ENCODE measurements at regions of chr20 and their contacts with region 1.

Region 1: DNA sequence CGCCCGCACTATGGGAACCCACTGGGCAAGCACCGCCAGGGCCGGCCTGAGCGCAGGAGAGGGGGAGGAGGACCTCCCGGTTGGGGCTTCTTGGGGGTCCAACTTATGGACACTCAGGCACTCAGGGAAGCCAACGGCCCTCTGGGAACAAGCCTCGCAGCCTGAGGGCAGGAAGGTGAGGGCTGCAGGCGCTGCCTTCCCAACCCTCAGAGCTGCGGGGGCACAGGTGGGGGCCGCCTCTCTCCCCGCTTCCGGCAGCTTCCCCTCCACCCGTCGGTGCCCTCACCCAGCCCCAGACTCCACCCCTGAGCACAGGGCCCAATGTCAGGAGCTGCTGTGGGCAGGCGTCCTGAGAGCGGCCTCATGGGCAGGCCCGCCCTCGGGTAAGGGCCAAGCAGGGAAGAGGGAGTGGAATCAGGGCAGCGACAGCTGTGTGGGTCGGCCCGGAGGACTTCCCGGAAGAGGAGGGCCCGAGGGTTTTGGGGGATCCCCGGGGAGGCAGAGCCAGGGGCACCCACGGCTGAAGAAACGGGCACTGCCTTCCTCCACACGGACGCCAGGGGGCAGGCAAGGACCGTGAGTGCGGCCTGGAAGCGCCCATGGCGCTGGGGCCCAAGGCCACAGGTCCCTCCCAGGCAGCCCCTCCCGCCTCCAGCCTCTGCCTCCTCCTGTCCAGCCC is 488 bp upstream of the PTK6 start:
- DNase-seq: peak; percentile 92 to 95 (median 93)
- H3K4me3 ChIP-seq: peak overlapping the region in 1 of 2 donors; percentile 56
- H3K4me3 Mint-ChIP-seq: peak overlapping the region; percentile 65 to 85 (median 80)
- H3K27ac ChIP-seq: peak overlapping the region; percentile 68
- H3K27ac Mint-ChIP-seq: peak overlapping the region; percentile 35 to 89 (median 81)
- H3K4me1 ChIP-seq: peaks cover 28% of the 10 kb centered on the region
- H3K4me1 Mint-ChIP-seq: peaks cover 0 to 17% (median 2%) of the 10 kb centered on the region in 4 donors
- H3K27me3 ChIP-seq: no peaks in the 10 kb centered on the region
- H3K27me3 Mint-ChIP-seq: no peaks in the 10 kb centered on the region

Region 2: DNA sequence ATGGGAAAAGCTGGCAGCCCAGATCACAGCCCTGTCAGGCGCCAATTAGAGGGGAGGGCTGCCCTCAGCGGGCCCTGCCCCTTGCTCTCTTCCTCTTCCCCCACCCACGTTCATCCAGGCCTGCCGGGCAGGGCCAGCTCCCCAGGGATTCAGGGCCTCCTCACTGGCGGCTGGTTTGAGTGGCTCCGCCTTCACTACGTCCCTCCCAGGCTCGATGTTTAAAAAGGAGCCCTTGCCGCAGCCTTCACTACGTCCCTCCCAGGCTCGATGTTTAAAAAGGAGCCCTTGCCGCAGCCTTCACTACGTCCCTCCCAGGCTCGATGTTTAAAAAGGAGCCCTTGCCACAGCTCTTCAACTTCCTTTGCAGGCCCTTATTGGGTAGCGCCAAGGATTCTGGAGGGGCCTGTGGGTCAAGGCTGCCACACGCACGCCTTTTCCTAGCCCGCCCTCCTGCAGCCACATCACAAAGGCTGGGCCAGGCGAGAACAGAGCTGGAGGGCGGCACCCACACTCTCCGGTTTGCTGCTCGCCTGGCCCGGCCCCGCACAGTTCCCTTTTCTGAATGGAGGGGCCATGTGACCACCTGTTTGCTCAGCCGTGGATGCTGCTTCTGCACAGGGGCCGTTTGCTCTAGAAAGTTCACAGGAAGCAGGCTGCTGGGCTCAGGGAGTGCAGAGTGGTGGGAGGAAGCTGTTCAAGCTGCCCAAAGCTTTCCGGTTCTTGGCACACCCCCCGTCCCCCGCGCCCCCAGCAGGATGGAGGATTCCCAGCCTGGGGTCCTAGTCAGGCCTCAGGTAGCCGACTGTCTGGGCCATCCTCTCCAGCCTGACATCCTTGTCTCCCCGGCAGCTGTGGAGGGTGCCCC is 583.6 kb before region 1 on chr20:
- CTCF ChIA-PET with region 1: no interaction called
- POLR2A ChIA-PET with region 1: no interaction called
- intact Hi-C with region 1: no loop called
- DNase-seq: peak; percentile 74 to 85 (median 77)
- H3K4me3 ChIP-seq: peak overlapping the region; percentile 17 to 27
- H3K4me3 Mint-ChIP-seq: peak overlapping the region; percentile 72 to 93 (median 83)
- H3K27ac ChIP-seq: peak overlapping the region; percentile 57
- H3K27ac Mint-ChIP-seq: peak overlapping the region; percentile 92 to 95 (median 93)
- H3K4me1 ChIP-seq: peaks cover 28% of the 10 kb centered on the region
- H3K4me1 Mint-ChIP-seq: peaks cover 11 to 31% (median 24%) of the 10 kb centered on the region in 4 donors
- H3K27me3 ChIP-seq: no peaks in the 10 kb centered on the region
- H3K27me3 Mint-ChIP-seq: no peaks in the 10 kb centered on the region

Region 3: GRCh38 chr20:63495741-63496595 is 41.7 kb before region 1 on chr20:
- CTCF ChIA-PET with region 1: interaction called, 12 read pairs
- POLR2A ChIA-PET with region 1: interaction called, 7 read pairs
- intact Hi-C with region 1: no loop called
- DNase-seq: peak; percentile 63 to 72 (median 68)
- H3K4me3 ChIP-seq: peak overlapping the region in 1 of 2 donors; percentile 43
- H3K4me3 Mint-ChIP-seq: peak overlapping the region in 7 of 8 donors; percentile 48 to 83 (median 71)
- H3K27ac ChIP-seq: no peak overlapping the region
- H3K27ac Mint-ChIP-seq: no peak overlapping the region
- H3K4me1 ChIP-seq: peaks cover 18% of the 10 kb centered on the region
- H3K4me1 Mint-ChIP-seq: peaks cover 1 to 8% (median 3%) of the 10 kb centered on the region in 4 donors
- H3K27me3 ChIP-seq: peaks cover 12% of the 10 kb centered on the region
- H3K27me3 Mint-ChIP-seq: peaks cover 5 to 9% of the 10 kb centered on the region in 2 donors

Region 4: GRCh38 chr20:63567386-63568169 is 29.9 kb after region 1 on chr20:
- CTCF ChIA-PET with region 1: interaction called, 3 read pairs
- POLR2A ChIA-PET with region 1: interaction called, 11 read pairs
- intact Hi-C with region 1: no loop called
- DNase-seq: peak; percentile 39 to 71 (median 57)
- H3K4me3 ChIP-seq: peak overlapping the region; percentile 42 to 68
- H3K4me3 Mint-ChIP-seq: peak overlapping the region; percentile 78 to 92 (median 84)
- H3K27ac ChIP-seq: peak overlapping the region; percentile 24
- H3K27ac Mint-ChIP-seq: peak overlapping the region in 5 of 7 donors; percentile 57 to 87 (median 60)
- H3K4me1 ChIP-seq: peaks cover 28% of the 10 kb centered on the region
- H3K4me1 Mint-ChIP-seq: peaks cover 6 to 31% (median 18%) of the 10 kb centered on the region in 4 donors
- H3K27me3 ChIP-seq: no peaks in the 10 kb centered on the region
- H3K27me3 Mint-ChIP-seq: no peaks in the 10 kb centered on the region

Region 5: GRCh38 chr20:63627129-63627750 is 89.6 kb after region 1 on chr20:
- CTCF ChIA-PET with region 1: interaction called, 6 read pairs
- POLR2A ChIA-PET with region 1: interaction called, 10 read pairs
- intact Hi-C with region 1: no loop called
- DNase-seq: peak; percentile 92 to 99 (median 96)
- H3K4me3 ChIP-seq: peak overlapping the region; percentile 91 to 95
- H3K4me3 Mint-ChIP-seq: peak overlapping the region; percentile 94 to 99 (median 96)
- H3K27ac ChIP-seq: peak overlapping the region; percentile 86
- H3K27ac Mint-ChIP-seq: peak overlapping the region; percentile 57 to 96 (median 90)
- H3K4me1 ChIP-seq: peaks cover 41% of the 10 kb centered on the region
- H3K4me1 Mint-ChIP-seq: peaks cover 19 to 54% (median 37%) of the 10 kb centered on the region in 4 donors
- H3K27me3 ChIP-seq: no peaks in the 10 kb centered on the region
- H3K27me3 Mint-ChIP-seq: no peaks in the 10 kb centered on the region

Region 6: GRCh38 chr20:63657937-63658748 is 120.5 kb after region 1 on chr20 and contains the start of gene RTEL1:
- CTCF ChIA-PET with region 1: interaction called, 6 read pairs
- POLR2A ChIA-PET with region 1: interaction called, 13 read pairs
- intact Hi-C with region 1: loop called (anchors 1 kb)
- DNase-seq: peak; percentile 86 to 93 (median 88)
- H3K4me3 ChIP-seq: peak within 1 kb of the TSS; percentile 91 to 97
- H3K4me3 Mint-ChIP-seq: peak within 1 kb of the TSS; percentile 92 to 98 (median 96)
- H3K27ac ChIP-seq: peak within 1 kb of the TSS; percentile 75
- H3K27ac Mint-ChIP-seq: peak within 1 kb of the TSS; percentile 94 to 98 (median 96)
- H3K4me1 ChIP-seq: peaks cover 42% of the 10 kb centered on the region
- H3K4me1 Mint-ChIP-seq: peaks cover 17 to 48% (median 24%) of the 10 kb centered on the region in 4 donors
- H3K27me3 ChIP-seq: no peaks in the 10 kb centered on the region
- H3K27me3 Mint-ChIP-seq: no peaks in the 10 kb centered on the region
- total RNA-seq, gene RTEL1: 30.9 to 36.0 TPM

Region 7: DNA sequence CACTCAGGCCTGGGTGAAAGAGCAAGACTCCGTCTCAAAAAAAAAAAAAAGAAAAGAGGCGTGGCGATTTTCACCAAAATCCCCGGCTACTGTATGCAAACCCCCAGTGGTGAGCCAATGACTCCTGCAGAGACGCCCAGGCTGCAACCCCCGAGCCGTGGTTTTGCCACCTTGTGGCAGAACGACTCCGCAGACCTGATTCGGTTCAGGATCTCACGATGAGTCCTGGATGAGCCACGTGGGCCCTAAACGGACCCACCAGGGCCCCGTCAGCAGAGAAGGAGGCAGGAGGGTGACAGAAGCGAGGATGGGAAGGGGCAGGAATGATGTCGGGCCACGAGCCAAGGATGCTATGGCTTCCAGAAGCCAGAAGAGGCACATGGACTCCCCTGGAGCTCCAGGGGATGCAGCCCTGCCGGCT is 244.4 kb after region 1 on chr20:
- CTCF ChIA-PET with region 1: interaction called, 15 read pairs
- POLR2A ChIA-PET with region 1: interaction called, 5 read pairs
- intact Hi-C with region 1: loop called (anchors 1 kb)
- DNase-seq: peak; percentile 65 to 83 (median 73)
- H3K4me3 ChIP-seq: no peak overlapping the region
- H3K4me3 Mint-ChIP-seq: peak overlapping the region in 6 of 8 donors; percentile 55 to 80 (median 70)
- H3K27ac ChIP-seq: no peak overlapping the region
- H3K27ac Mint-ChIP-seq: peak overlapping the region; percentile 17 to 90 (median 82)
- H3K4me1 ChIP-seq: peaks cover 14% of the 10 kb centered on the region
- H3K4me1 Mint-ChIP-seq: peaks cover 16 to 27% (median 17%) of the 10 kb centered on the region in 4 donors
- H3K27me3 ChIP-seq: no peaks in the 10 kb centered on the region
- H3K27me3 Mint-ChIP-seq: no peaks in the 10 kb centered on the region

Region 8: GRCh38 chr20:63973636-63974402 is 436.2 kb after region 1 on chr20:
- CTCF ChIA-PET with region 1: interaction called, 11 read pairs
- POLR2A ChIA-PET with region 1: interaction called, 6 read pairs
- intact Hi-C with region 1: loop called (anchors 1 kb)
- DNase-seq: peak; percentile 69 to 75 (median 71)
- H3K4me3 ChIP-seq: no peak overlapping the region
- H3K4me3 Mint-ChIP-seq: peak overlapping the region in 1 of 8 donors; percentile 43
- H3K27ac ChIP-seq: no peak overlapping the region
- H3K27ac Mint-ChIP-seq: peak overlapping the region in 6 of 7 donors; percentile 46 to 89 (median 71)
- H3K4me1 ChIP-seq: peaks cover 30% of the 10 kb centered on the region
- H3K4me1 Mint-ChIP-seq: peaks cover 22 to 55% (median 35%) of the 10 kb centered on the region in 4 donors
- H3K27me3 ChIP-seq: no peaks in the 10 kb centered on the region
- H3K27me3 Mint-ChIP-seq: no peaks in the 10 kb centered on the region

Measured in CD4-positive, alpha-beta memory T cell (primary cell).